ENCODE measurements at regions of chr6 and their contacts with region 1.

Region 1: GRCh38 chr6:119147101-119148053 is 68.9 kb upstream of the FAM184A start:
- DNase-seq: peak; percentile 28
- H3K4me3 Mint-ChIP-seq: no peak overlapping the region
- H3K27ac Mint-ChIP-seq: peak overlapping the region; percentile 79
- H3K4me1 Mint-ChIP-seq: peaks cover 55% of the 10 kb centered on the region
- H3K27me3 Mint-ChIP-seq: no peaks in the 10 kb centered on the region

Region 2: GRCh38 chr6:119129148-119129967 is 18.0 kb before region 1 on chr6:
- intact Hi-C with region 1: loop called (anchors 2 kb)
- DNase-seq: no peak
- H3K4me3 Mint-ChIP-seq: no peak overlapping the region
- H3K27ac Mint-ChIP-seq: peak overlapping the region; percentile 36
- H3K4me1 Mint-ChIP-seq: peaks cover 4% of the 10 kb centered on the region
- H3K27me3 Mint-ChIP-seq: peaks cover 16% of the 10 kb centered on the region

Region 3: GRCh38 chr6:119215885-119216590 is 68.7 kb after region 1 on chr6:
- intact Hi-C with region 1: no loop called
- DNase-seq: no peak
- H3K4me3 Mint-ChIP-seq: no peak overlapping the region
- H3K27ac Mint-ChIP-seq: no peak overlapping the region
- H3K4me1 Mint-ChIP-seq: no peaks in the 10 kb centered on the region
- H3K27me3 Mint-ChIP-seq: no peaks in the 10 kb centered on the region

Region 4: GRCh38 chr6:119313937-119314884 is 166.8 kb after region 1 on chr6:
- intact Hi-C with region 1: loop called (anchors 1 kb)
- DNase-seq: peak; percentile 39
- H3K4me3 Mint-ChIP-seq: peak overlapping the region; percentile 66
- H3K27ac Mint-ChIP-seq: peak overlapping the region; percentile 99
- H3K4me1 Mint-ChIP-seq: peaks cover 80% of the 10 kb centered on the region
- H3K27me3 Mint-ChIP-seq: no peaks in the 10 kb centered on the region

Region 5: DNA sequence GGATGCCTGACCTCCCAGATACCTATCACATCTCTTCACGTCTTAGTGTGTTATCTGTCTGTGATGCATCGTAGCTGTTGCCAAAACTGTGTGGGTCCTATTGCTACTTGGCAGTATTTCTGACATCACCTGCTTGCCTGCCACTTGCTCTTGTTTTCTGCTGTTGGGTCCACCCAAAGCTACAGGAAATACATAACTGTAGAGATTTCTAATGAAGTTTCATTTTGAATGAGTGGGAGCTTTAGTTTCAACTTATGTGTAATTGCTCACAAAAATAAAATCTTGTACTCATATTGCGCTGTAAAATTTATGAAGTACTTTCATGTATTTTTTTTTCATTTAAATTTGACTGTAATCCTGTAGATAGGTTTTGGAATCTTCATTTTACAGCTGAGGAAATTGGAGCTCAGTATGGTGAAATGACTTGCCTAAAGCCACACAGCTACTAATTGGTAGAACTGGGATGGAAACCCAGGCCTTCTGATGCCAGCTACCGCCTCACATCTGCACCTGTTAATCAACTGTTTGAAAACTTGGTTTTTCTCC is 315.8 kb after region 1 on chr6:
- intact Hi-C with region 1: loop called (anchors 1 kb)
- DNase-seq: peak; percentile 37
- H3K4me3 Mint-ChIP-seq: peak overlapping the region; percentile 11
- H3K27ac Mint-ChIP-seq: peak overlapping the region; percentile 84
- H3K4me1 Mint-ChIP-seq: peaks cover 65% of the 10 kb centered on the region
- H3K27me3 Mint-ChIP-seq: no peaks in the 10 kb centered on the region

Region 6: GRCh38 chr6:119736296-119737021 is 589.1 kb after region 1 on chr6:
- intact Hi-C with region 1: loop called (anchors 10 kb)
- DNase-seq: no peak
- H3K4me3 Mint-ChIP-seq: no peak overlapping the region
- H3K27ac Mint-ChIP-seq: no peak overlapping the region
- H3K4me1 Mint-ChIP-seq: no peaks in the 10 kb centered on the region
- H3K27me3 Mint-ChIP-seq: peaks cover 36% of the 10 kb centered on the region